AG04450 (cell line): ENCODE measurements at regions of chr5 and their contacts with region 1.

Region 1: GRCh38 chr5:140346348-140347101 is at the start of gene HBEGF:
- DNase-seq: no peak
- H3K4me3 ChIP-seq: peak within 1 kb of the TSS; percentile 78
- H3K27ac ChIP-seq: no peak within 1 kb of the TSS
- H3K27me3 ChIP-seq: no peaks in the 10 kb centered on the region
- CTCF ChIP-seq: peak; percentile 49
- polyA plus RNA-seq, gene HBEGF: 6.6 and 7.0 TPM in 2 replicates

Region 2: DNA sequence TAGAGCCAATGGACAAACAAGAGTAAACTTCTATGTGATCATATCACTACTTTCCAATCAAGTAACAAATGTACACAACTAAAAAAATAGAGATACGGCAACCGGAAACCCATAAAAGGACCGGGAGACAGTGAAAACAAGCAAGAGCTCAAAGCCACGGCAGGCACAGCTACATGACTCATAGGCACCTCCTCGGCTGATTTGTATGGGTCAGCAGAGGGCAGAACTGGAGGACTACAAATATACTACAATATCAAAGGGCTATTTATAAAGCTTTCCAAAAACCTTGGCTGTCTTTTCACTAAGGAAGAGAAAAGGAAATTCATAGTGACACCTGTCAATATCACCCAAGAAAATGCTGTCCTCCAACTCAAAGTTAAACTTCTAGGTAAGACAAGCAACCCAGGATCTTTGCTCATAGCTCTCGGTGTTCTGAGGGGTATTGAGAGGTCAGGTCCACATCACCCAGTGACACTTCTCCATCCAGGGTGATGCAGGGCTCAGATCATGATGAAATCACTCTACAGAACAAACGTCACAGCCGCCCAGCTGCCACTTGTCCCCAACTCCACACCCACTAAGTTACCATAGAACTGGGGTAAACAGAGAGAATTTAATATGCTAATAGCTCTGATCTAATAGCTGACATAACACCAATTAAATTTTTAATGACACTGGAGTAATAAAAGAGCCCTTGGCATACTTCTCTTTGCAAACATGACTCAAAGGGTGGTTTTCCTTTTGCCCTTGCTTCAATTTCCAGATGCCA is 84.9 kb before region 1 on chr5:
- CTCF ChIA-PET with region 1: interaction called, 98 read pairs
- POLR2A ChIA-PET with region 1: interaction called, 6 read pairs
- DNase-seq: peak; percentile 72
- H3K4me3 ChIP-seq: 0 out of 2 replicates have a peak overlapping the region, but pooled peaks have one; percentile 5
- H3K27ac ChIP-seq: no peak overlapping the region
- H3K27me3 ChIP-seq: no peaks in the 10 kb centered on the region
- CTCF ChIP-seq: peak; percentile 19; the same call in 1 of the 2 replicates

Region 3: GRCh38 chr5:140322751-140323731 is 23.5 kb before region 1 on chr5:
- CTCF ChIA-PET with region 1: interaction called, 15 read pairs
- POLR2A ChIA-PET with region 1: interaction called, 8 read pairs
- DNase-seq: peak; percentile 88
- H3K4me3 ChIP-seq: peak overlapping the region; percentile 7; the same call in 1 of the 2 replicates
- H3K27ac ChIP-seq: peak overlapping the region; percentile 89
- H3K27me3 ChIP-seq: no peaks in the 10 kb centered on the region
- CTCF ChIP-seq: no peak

Region 4: GRCh38 chr5:140357726-140358093 is 11.2 kb after region 1 on chr5:
- CTCF ChIA-PET with region 1: interaction called, 25 read pairs
- POLR2A ChIA-PET with region 1: interaction called, 6 read pairs
- DNase-seq: peak; percentile 76
- H3K4me3 ChIP-seq: peak overlapping the region; percentile 27
- H3K27ac ChIP-seq: no peak overlapping the region
- H3K27me3 ChIP-seq: no peaks in the 10 kb centered on the region
- CTCF ChIP-seq: peak; percentile 91

Region 5: DNA sequence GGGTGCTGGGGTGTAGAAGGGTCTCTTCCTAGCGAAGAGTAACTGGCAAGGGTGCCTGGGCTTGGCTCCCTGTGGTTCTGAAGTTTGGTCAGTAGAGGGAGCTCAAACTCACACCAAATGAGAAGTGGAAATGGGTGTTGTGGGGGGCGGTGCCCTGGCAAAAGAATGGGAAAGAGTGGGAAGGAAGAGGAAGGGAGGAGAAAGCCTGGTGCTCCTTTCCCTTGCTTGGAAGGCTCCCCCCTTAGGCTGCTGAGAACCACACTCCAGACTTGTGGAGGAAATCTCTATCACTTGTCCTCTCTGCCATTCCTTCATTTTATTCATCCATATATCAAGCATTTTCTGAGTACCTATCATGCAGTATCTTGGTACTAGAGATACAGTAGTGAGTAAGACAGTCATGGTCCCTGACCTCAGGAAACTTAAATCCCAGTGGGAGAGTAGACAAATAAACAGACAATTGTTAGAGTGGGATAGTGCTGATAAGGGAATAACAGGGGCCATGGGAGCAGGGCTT is 26.5 kb after region 1 on chr5:
- CTCF ChIA-PET with region 1: interaction called, 19 read pairs
- POLR2A ChIA-PET with region 1: interaction called, 3 read pairs
- DNase-seq: peak; percentile 44
- H3K4me3 ChIP-seq: no peak overlapping the region
- H3K27ac ChIP-seq: no peak overlapping the region
- H3K27me3 ChIP-seq: peaks cover 6% of the 10 kb centered on the region
- CTCF ChIP-seq: peak; percentile 91

Region 6: DNA sequence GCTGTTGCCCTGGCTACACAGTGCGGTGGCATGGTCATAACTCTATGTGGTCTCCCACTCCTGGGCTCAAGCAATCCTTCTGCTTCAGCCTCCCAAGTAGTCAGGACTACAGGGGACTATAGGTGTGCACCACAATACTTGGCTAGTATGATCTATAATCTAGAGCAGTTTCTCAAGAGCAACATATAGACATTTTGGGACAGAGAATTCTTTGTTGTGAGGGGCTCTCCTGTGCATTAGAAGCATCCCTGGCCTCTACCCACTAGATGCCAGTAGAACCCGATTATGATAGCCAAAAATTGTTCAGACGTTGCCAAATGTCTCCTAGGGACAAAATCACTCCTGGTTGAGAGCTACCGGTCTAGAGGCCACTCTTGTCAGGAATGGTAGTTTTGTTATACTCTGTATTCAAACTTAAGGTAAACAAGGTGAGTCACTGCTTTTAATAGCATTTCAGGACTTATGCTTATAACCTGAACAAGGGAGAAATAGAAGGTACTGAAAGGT is 62.3 kb after region 1 on chr5:
- CTCF ChIA-PET with region 1: no interaction called
- POLR2A ChIA-PET with region 1: no interaction called
- DNase-seq: no peak
- H3K4me3 ChIP-seq: no peak overlapping the region
- H3K27ac ChIP-seq: no peak overlapping the region
- H3K27me3 ChIP-seq: no peaks in the 10 kb centered on the region
- CTCF ChIP-seq: no peak